PC-9 (cell line): ENCODE measurements at regions of chr22 and their contacts with region 1.

Region 1: DNA sequence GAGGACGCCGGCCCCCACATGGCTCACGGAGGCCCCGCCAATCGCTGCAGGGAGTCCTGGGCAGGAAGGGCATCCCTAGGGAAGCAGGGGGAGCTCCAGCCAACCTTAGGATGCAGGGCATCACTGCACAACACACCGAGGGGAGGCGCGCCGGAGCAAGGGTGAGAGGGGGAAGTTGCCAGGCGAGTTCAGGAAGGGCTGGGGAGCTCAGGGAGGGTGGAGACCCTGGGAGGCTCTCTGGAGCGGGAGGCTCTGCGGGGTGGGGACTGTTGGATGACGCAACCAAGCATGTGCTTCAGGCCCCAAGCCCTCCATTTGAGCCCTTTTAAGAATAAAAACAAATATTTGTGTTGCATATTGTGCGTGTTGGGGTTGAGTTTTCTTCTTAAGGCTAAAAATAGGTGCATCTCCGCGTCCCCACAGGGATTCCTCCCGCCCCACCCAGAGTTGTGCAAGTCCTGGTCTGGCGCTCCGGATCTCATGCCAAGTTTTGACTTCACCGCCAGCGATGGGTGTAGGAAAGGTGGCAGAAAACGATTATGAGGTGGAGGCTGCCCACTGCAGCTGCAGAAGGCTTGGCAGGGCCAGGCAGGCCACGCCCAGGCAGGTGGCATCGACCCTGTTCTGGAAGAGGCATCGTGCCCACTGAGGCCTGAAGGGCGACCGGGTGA is 65.2 kb downstream of the WNT7B start:
- DNase-seq: peak; percentile 86 to 92
- H3K4me3 ChIP-seq: peak overlapping the region; percentile 1; the same call in 1 of the 2 replicates
- H3K27ac ChIP-seq: peak overlapping the region; percentile 62
- H3K4me1 ChIP-seq: peaks cover 54% of the 10 kb centered on the region
- H3K27me3 ChIP-seq: no peaks in the 10 kb centered on the region
- CTCF ChIP-seq: peak; percentile 71

Region 2: DNA sequence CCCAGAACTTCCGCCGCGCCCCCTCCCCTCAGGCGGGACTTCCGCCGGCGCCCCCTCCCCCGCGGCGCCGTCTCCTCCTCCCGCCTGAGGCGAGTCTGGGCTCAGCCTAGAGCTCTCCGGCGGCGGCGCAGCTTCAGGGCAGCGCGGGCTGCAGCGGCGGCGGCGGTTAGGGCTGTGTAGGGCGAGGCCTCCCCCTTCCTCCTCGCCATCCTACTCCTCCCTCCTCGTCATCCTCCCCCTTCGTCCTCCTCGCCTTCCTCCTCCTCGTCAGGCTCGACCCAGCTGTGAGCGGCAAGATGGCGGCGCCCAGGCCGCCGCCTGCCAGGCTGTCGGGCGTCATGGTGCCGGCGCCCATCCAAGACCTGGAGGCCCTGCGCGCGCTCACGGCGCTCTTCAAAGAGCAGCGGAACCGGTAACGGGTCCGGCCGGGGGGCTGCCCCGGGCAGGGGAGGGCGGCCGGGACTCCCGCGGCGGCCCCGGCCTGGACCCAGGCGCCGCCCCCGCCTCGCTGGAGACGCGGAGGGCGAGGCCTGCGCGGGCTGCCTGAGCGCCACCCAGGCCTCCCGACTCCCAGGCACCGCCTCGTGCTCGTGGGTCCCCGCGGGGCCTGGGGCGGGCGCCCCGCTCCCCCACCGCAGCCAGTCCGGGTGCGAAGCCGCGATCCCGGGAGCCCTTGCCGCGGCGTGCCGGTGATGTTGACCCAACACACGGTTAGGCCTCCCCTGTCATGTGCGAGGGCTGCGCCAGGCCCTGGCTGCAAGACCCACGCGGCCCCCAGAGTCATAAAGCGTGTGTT is 239.8 kb before region 1 on chr22 and contains the start of gene ATXN10:
- CTCF ChIA-PET with region 1: no interaction called
- POLR2A ChIA-PET with region 1: no interaction called
- intact Hi-C with region 1: no loop called
- DNase-seq: peak; percentile 53 to 58
- H3K4me3 ChIP-seq: peak within 1 kb of the TSS; percentile 69
- H3K27ac ChIP-seq: peak within 1 kb of the TSS; percentile 73
- H3K4me1 ChIP-seq: peaks cover 51% of the 10 kb centered on the region
- H3K27me3 ChIP-seq: no peaks in the 10 kb centered on the region
- CTCF ChIP-seq: no peak
- total RNA-seq, gene ATXN10: 275 and 303 TPM in 2 replicates

Region 3: DNA sequence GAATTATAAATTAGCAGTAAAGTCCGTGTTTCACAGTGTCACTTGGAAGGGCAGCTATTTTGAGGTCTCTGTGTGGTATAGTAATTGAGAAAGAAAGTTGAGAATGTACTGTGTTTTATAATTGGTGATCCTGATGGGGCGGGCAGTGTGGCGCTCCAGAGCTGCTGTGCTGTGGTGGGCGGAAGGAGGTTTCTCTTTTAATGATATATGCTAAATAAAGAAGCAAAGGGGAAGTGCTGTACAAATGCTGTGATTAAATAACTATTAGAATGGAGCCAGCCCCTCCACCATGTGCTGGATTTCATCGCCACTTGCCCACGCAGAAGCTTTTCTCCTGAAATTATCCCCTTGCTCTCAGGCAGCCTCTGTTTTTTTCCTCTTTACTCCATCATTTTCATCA is 215.5 kb before region 1 on chr22:
- CTCF ChIA-PET with region 1: no interaction called
- POLR2A ChIA-PET with region 1: no interaction called
- intact Hi-C with region 1: no loop called
- DNase-seq: no peak
- H3K4me3 ChIP-seq: no peak overlapping the region
- H3K27ac ChIP-seq: no peak overlapping the region
- H3K4me1 ChIP-seq: peaks cover 29% of the 10 kb centered on the region
- H3K27me3 ChIP-seq: no peaks in the 10 kb centered on the region
- CTCF ChIP-seq: no peak

Region 4: GRCh38 chr22:45889305-45890093 is 22.2 kb before region 1 on chr22:
- CTCF ChIA-PET with region 1: no interaction called
- POLR2A ChIA-PET with region 1: no interaction called
- intact Hi-C with region 1: no loop called
- DNase-seq: no peak
- H3K4me3 ChIP-seq: no peak overlapping the region
- H3K27ac ChIP-seq: no peak overlapping the region
- H3K4me1 ChIP-seq: peaks cover 31% of the 10 kb centered on the region
- H3K27me3 ChIP-seq: no peaks in the 10 kb centered on the region
- CTCF ChIP-seq: no peak

Region 5: GRCh38 chr22:45942787-45943493 is 31.2 kb after region 1 on chr22:
- CTCF ChIA-PET with region 1: no interaction called
- POLR2A ChIA-PET with region 1: interaction called, 17 read pairs
- intact Hi-C with region 1: no loop called
- DNase-seq: no peak
- H3K4me3 ChIP-seq: no peak overlapping the region
- H3K27ac ChIP-seq: no peak overlapping the region
- H3K4me1 ChIP-seq: no peaks in the 10 kb centered on the region
- H3K27me3 ChIP-seq: no peaks in the 10 kb centered on the region
- CTCF ChIP-seq: no peak

Region 6: DNA sequence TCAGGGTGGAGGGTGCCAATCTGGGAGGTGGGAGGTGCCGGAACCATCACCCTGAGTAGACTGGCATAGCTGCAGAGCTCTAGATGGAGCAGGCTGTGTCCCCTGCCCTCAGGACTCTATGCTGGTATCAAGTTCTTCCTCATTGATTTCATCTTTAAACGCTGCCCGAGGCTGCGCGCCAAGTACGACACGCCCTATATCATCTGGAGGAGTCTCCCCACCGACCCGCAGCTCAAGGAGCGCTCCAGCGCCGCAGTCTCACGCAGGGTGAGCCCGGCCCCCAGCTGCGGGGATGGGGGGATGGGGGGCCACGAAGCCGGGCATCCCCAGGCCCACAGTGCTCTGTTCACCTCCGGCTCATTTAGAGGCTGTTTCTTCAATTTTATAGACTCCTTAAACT is 761.0 kb after region 1 on chr22:
- CTCF ChIA-PET with region 1: no interaction called
- POLR2A ChIA-PET with region 1: no interaction called
- intact Hi-C with region 1: no loop called
- DNase-seq: no peak
- H3K4me3 ChIP-seq: no peak overlapping the region
- H3K27ac ChIP-seq: no peak overlapping the region
- H3K4me1 ChIP-seq: no peaks in the 10 kb centered on the region
- H3K27me3 ChIP-seq: no peaks in the 10 kb centered on the region
- CTCF ChIP-seq: no peak